Caco-2 (cell line): ENCODE measurements at regions of chr20 and their contacts with region 1.

Region 1: GRCh38 chr20:47317127-47317895 is 39.2 kb downstream of the ZMYND8 start:
- DNase-seq: no peak
- H3K4me3 ChIP-seq: no peak overlapping the region
- H3K4me3 Mint-ChIP-seq: peak overlapping the region; percentile 69
- H3K27ac Mint-ChIP-seq: peak overlapping the region; percentile 97
- H3K4me1 ChIP-seq: peaks cover 97% of the 10 kb centered on the region
- H3K4me1 Mint-ChIP-seq: peaks cover 69% of the 10 kb centered on the region
- H3K27me3 ChIP-seq: no peaks in the 10 kb centered on the region
- H3K27me3 Mint-ChIP-seq: no peaks in the 10 kb centered on the region
- CTCF ChIP-seq: no peak

Region 2: GRCh38 chr20:47133574-47134456 is 183.5 kb before region 1 on chr20:
- CTCF ChIA-PET with region 1: no interaction called
- POLR2A ChIA-PET with region 1: no interaction called
- intact Hi-C with region 1: no loop called
- DNase-seq: no peak
- H3K4me3 ChIP-seq: no peak overlapping the region
- H3K4me3 Mint-ChIP-seq: no peak overlapping the region
- H3K27ac Mint-ChIP-seq: no peak overlapping the region
- H3K4me1 ChIP-seq: 0 out of 2 replicates have a peak, but pooled peaks cover 5% of the 10 kb centered on the region
- H3K4me1 Mint-ChIP-seq: peaks cover 9% of the 10 kb centered on the region
- H3K27me3 ChIP-seq: no peaks in the 10 kb centered on the region
- H3K27me3 Mint-ChIP-seq: no peaks in the 10 kb centered on the region
- CTCF ChIP-seq: no peak

Region 3: DNA sequence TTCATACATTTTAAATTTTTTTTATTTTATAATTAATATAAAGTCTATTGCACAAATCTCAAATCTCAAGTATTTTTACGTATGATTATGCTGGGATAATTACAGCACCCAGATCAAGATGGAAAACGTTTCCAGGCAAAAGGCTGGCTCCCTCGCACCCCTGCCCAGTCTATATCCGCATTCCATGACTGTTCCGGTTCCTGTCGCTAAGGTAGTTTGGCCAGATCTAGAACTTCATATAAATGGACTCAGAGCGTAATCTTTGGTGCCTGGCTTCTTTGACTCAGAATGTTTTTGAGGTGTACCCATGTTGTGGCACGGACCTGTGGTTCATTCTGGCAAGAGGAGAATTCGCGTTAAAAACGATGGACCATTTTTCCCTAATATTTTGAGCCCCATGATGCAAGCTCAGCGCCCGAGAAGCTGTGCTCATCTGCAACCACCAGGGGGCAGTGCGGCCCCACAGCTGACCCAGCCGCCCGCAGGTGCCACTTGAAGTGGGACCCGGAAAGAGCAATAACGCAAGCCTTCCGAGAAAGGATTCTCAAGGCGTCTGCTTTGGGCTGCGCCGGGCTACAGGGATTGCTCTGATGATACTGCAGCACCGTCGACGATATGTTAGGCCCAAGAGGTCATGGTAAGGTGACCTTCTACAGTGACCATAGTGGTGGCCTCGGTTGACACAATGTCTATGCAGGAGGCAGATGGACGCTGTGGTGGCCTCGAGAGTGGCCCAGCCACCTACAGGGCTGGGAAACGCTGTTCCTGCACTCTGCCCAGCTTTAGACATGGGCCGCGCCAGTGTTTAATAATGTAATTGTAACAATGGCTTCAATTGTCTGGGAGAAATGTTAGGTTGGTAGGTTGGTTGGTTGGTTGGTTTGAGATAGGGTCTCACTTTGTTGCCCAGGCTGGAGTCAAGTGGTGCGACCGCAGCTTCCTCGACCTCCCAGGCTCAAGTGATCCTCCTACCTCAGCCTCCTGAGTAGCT is 120.9 kb before region 1 on chr20:
- CTCF ChIA-PET with region 1: interaction called, 3 read pairs
- POLR2A ChIA-PET with region 1: interaction called, 3 read pairs
- intact Hi-C with region 1: loop called (anchors 1 kb)
- DNase-seq: peak; percentile 90 to 95
- H3K4me3 ChIP-seq: no peak overlapping the region
- H3K4me3 Mint-ChIP-seq: peak overlapping the region; percentile 1
- H3K27ac Mint-ChIP-seq: peak overlapping the region; percentile 44
- H3K4me1 ChIP-seq: peaks cover 25% of the 10 kb centered on the region
- H3K4me1 Mint-ChIP-seq: peaks cover 27% of the 10 kb centered on the region
- H3K27me3 ChIP-seq: no peaks in the 10 kb centered on the region
- H3K27me3 Mint-ChIP-seq: no peaks in the 10 kb centered on the region
- CTCF ChIP-seq: peak; percentile 100

Region 4: DNA sequence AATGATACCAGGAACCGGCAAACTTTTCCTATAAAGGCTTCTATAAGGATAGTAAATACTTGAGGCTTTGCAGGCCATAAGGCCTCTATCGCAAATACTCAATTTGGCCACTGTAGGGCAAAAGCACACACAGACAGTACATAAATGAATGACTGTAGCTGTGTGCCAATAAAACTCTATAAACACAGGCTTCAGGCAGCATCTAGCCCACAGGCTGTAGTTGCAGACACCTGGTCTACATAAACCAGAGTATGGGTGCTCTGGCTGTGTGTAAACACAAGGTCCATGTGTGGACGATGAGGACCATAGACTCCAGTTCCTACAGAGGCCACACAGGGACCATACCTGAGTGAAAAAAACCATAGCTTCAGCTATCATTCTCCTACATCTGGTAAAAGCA is 13.0 kb before region 1 on chr20:
- CTCF ChIA-PET with region 1: interaction called, 6 read pairs
- POLR2A ChIA-PET with region 1: interaction called, 4 read pairs
- intact Hi-C with region 1: loop called (anchors 2 kb)
- DNase-seq: peak; percentile 63 to 71
- H3K4me3 ChIP-seq: no peak overlapping the region
- H3K4me3 Mint-ChIP-seq: no peak overlapping the region
- H3K27ac Mint-ChIP-seq: peak overlapping the region; percentile 77
- H3K4me1 ChIP-seq: peaks cover 23% of the 10 kb centered on the region
- H3K4me1 Mint-ChIP-seq: peaks cover 31% of the 10 kb centered on the region
- H3K27me3 ChIP-seq: no peaks in the 10 kb centered on the region
- H3K27me3 Mint-ChIP-seq: no peaks in the 10 kb centered on the region
- CTCF ChIP-seq: peak; percentile 38 to 57

Region 5: DNA sequence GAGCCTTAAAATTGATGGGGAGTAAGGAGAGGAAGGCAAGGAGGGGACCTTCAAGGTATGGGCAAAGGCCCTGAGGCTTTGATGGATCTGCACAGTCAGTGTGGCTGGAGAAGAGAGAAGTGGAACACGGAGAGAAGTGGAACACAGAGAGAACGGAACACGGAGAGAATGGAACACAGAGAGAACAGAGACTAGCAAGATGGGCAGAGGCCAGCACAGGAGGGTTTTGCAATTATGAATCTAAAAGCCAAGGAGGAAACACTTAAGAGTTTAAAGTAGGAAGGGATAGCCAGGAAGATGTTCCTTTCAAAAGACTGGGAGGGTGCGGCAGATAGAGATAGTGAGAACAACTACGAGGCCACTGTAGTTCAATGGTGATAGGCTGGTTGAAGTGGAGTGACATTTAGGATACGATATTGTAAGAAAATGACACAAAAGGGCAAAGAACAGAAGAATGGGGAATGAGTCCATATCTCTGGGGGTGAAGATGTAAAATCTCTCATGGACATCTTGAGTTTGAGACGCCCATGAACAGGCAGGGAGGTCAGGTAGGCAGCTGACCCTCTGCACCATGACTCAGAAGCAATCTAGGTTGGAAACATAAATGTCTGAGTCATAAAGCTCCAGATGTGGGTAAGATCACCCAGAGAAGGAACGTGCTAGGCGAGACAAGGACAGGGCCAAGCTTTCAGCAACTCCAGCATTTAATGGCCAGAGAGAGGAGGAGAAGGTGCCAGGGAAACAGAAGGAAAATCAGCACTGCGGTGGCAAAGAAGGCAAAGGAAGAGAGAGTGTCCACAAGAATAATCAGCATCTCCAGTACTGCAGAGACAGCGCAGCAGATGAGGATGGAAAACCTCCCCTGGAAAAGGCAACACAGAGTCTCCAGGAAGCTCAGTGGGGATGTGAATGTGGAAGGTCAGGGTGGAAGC is 13.9 kb after region 1 on chr20:
- CTCF ChIA-PET with region 1: no interaction called
- POLR2A ChIA-PET with region 1: interaction called, 10 read pairs
- intact Hi-C with region 1: loop called (anchors 1 kb)
- DNase-seq: no peak
- H3K4me3 ChIP-seq: no peak overlapping the region
- H3K4me3 Mint-ChIP-seq: peak overlapping the region; percentile 0
- H3K27ac Mint-ChIP-seq: peak overlapping the region; percentile 39
- H3K4me1 ChIP-seq: peaks cover 66% of the 10 kb centered on the region
- H3K4me1 Mint-ChIP-seq: peaks cover 50% of the 10 kb centered on the region
- H3K27me3 ChIP-seq: no peaks in the 10 kb centered on the region
- H3K27me3 Mint-ChIP-seq: no peaks in the 10 kb centered on the region
- CTCF ChIP-seq: no peak

Region 6: GRCh38 chr20:47336129-47336835 is 19.0 kb after region 1 on chr20:
- CTCF ChIA-PET with region 1: no interaction called
- POLR2A ChIA-PET with region 1: interaction called, 11 read pairs
- intact Hi-C with region 1: loop called (anchors 1 kb)
- DNase-seq: no peak
- H3K4me3 ChIP-seq: no peak overlapping the region
- H3K4me3 Mint-ChIP-seq: no peak overlapping the region
- H3K27ac Mint-ChIP-seq: peak overlapping the region; percentile 17
- H3K4me1 ChIP-seq: peaks cover 64% of the 10 kb centered on the region
- H3K4me1 Mint-ChIP-seq: peaks cover 59% of the 10 kb centered on the region
- H3K27me3 ChIP-seq: no peaks in the 10 kb centered on the region
- H3K27me3 Mint-ChIP-seq: no peaks in the 10 kb centered on the region
- CTCF ChIP-seq: no peak

Region 7: GRCh38 chr20:47392015-47392720 is 74.9 kb after region 1 on chr20:
- CTCF ChIA-PET with region 1: no interaction called
- POLR2A ChIA-PET with region 1: no interaction called
- intact Hi-C with region 1: no loop called
- DNase-seq: peak; percentile 68 to 82
- H3K4me3 ChIP-seq: no peak overlapping the region
- H3K4me3 Mint-ChIP-seq: no peak overlapping the region
- H3K27ac Mint-ChIP-seq: peak overlapping the region; percentile 64
- H3K4me1 ChIP-seq: peaks cover 12% of the 10 kb centered on the region
- H3K4me1 Mint-ChIP-seq: peaks cover 21% of the 10 kb centered on the region
- H3K27me3 ChIP-seq: no peaks in the 10 kb centered on the region
- H3K27me3 Mint-ChIP-seq: no peaks in the 10 kb centered on the region
- CTCF ChIP-seq: no peak

Region 8: DNA sequence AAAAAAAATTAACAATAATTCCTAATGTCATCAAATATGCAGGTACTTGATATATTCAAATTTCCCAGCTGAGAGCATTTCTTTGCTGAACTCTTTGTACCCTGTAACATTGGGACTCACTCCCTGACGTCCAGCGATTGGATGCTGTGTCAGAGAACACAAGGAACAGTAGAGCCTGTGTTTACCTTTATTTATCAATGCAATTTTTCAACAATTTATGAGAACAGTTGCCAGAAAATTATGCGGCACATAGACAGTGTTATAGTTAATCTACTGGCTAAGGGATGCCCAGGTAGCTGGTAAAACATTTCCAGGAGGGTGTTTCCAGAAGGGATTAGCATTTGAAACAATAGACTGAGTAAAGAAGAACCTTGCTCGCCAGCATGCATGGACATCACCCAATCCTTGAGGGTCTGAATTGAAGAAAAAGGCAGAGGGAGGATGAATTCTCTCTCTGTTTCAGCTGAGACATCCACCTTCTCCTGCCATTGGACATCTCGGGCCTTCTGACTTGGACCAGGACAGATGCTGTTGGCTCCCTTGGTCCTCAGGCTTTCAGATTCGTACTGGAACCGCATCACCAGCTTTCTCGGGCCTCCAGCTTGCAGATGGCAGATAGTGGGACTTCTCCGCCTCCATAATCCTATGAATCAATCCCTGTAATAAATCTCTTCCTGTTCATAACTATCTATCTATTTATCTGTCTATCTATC is 142.2 kb after region 1 on chr20:
- CTCF ChIA-PET with region 1: interaction called, 15 read pairs
- POLR2A ChIA-PET with region 1: no interaction called
- intact Hi-C with region 1: no loop called
- DNase-seq: no peak
- H3K4me3 ChIP-seq: no peak overlapping the region
- H3K4me3 Mint-ChIP-seq: no peak overlapping the region
- H3K27ac Mint-ChIP-seq: peak overlapping the region; percentile 3
- H3K4me1 ChIP-seq: peaks cover 36% of the 10 kb centered on the region
- H3K4me1 Mint-ChIP-seq: peaks cover 39% of the 10 kb centered on the region
- H3K27me3 ChIP-seq: no peaks in the 10 kb centered on the region
- H3K27me3 Mint-ChIP-seq: no peaks in the 10 kb centered on the region
- CTCF ChIP-seq: no peak